ENCODE measurements at regions of chr13 and their contacts with region 1.

Region 1: GRCh38 chr13:87274209-87274819 is 396.9 kb upstream of the SLITRK5 start:
- DNase-seq: peak; percentile 26
- H3K4me3 ChIP-seq: no peak overlapping the region
- H3K27ac ChIP-seq: no peak overlapping the region
- H3K4me1 ChIP-seq: no peaks in the 10 kb centered on the region
- H3K27me3 ChIP-seq: no peaks in the 10 kb centered on the region
- CTCF ChIP-seq: peak; percentile 64 to 75

Region 2: DNA sequence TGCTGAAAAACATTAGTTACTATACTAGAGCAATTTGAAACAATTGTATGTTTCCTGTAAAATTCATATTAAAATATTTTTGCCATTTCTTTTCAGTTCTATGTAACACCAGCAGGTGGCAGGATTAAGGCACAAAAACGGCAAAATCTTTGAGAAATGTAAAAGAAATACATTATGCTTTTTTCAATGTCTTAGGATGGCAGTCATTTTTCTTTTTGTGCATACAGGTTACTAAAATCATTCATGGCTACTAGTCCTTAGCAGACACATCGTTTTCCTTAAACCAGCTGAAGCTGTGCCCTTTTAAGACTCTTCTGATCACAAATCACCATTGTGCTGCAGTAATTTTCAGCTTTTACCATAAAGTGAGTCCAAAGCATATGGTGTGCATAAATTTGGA is 403.9 kb before region 1 on chr13:
- CTCF ChIA-PET with region 1: interaction called, 3 read pairs
- dilution Hi-C with region 1: no loop called
- in situ Hi-C with region 1: loop called in 1 of 2 experiments (anchors 5 kb)
- intact Hi-C with region 1: loop called (anchors 1 kb)
- DNase-seq: no peak
- H3K4me3 ChIP-seq: no peak overlapping the region
- H3K27ac ChIP-seq: no peak overlapping the region
- H3K4me1 ChIP-seq: no peaks in the 10 kb centered on the region
- H3K27me3 ChIP-seq: no peaks in the 10 kb centered on the region
- CTCF ChIP-seq: peak; percentile 55 to 61